ENCODE measurements at regions of chr17 and their contacts with region 1.

Region 1: GRCh38 chr17:77054936-77055335 is 85.8 kb upstream of the SEC14L1 start:
- DNase-seq: no peak
- ATAC-seq: no peak
- H3K4me3 Mint-ChIP-seq: no peak overlapping the region
- H3K27ac Mint-ChIP-seq: no peak overlapping the region
- H3K4me1 Mint-ChIP-seq: peaks cover 3% of the 10 kb centered on the region
- H3K27me3 Mint-ChIP-seq: peaks cover 32% of the 10 kb centered on the region
- CTCF ChIP-seq: no peak

Region 2: DNA sequence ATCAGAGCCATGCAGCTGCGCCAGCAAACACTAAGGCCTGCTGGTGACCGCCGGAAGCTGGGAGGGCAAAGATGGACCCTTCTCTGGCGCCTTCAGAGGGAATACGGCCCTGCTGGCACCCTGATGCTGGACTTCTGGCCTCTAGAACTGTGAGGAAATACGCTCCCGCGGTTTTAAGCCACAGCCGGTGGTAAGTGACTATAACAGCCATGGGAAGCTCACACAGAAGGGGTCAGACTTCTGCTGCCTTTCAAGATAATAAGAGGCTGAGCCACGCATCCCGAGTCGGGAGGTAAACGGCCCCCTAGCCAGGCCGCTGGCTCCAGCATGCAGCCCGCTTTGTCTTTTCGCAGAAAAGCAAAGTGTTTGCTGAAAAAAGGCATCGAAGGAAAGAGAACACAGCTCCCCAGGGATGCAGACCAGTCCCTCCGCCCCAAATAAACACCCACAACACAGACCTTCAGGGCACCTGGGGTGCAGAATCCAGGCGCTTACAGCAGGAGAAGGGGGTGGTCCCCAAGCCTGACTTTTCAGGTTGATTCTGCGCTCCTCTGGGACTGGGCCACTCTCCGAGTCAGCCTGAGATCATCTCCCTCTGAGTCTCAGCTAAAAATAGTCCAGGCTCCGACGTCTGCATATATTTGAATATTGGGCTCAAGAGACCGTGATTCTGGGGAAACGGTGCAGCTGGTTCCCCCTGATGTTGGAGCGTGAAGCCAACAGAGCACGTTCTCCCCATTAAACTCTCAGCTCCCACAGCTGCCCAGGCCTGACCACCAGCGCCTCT is 97.1 kb before region 1 on chr17:
- CTCF ChIA-PET with region 1: interaction called, 19 read pairs
- POLR2A ChIA-PET with region 1: interaction called, 3 read pairs
- intact Hi-C with region 1: loop called (anchors 2 kb)
- DNase-seq: peak; percentile 42
- ATAC-seq: peak; percentile 91
- H3K4me3 Mint-ChIP-seq: peak overlapping the region; percentile 81
- H3K27ac Mint-ChIP-seq: peak overlapping the region; percentile 66
- H3K4me1 Mint-ChIP-seq: peaks cover 31% of the 10 kb centered on the region
- H3K27me3 Mint-ChIP-seq: peaks cover 2% of the 10 kb centered on the region
- CTCF ChIP-seq: no peak

Region 3: GRCh38 chr17:76968707-76969597 is 86.0 kb before region 1 on chr17:
- CTCF ChIA-PET with region 1: interaction called, 12 read pairs
- POLR2A ChIA-PET with region 1: interaction called, 7 read pairs
- intact Hi-C with region 1: no loop called
- DNase-seq: peak; percentile 71
- ATAC-seq: peak; percentile 90
- H3K4me3 Mint-ChIP-seq: peak overlapping the region; percentile 84
- H3K27ac Mint-ChIP-seq: peak overlapping the region; percentile 80
- H3K4me1 Mint-ChIP-seq: peaks cover 28% of the 10 kb centered on the region
- H3K27me3 Mint-ChIP-seq: peaks cover 28% of the 10 kb centered on the region
- CTCF ChIP-seq: no peak

Region 4: GRCh38 chr17:77011173-77012011 is 43.5 kb before region 1 on chr17:
- CTCF ChIA-PET with region 1: interaction called, 7 read pairs
- POLR2A ChIA-PET with region 1: interaction called, 5 read pairs
- intact Hi-C with region 1: loop called (anchors 2 kb)
- DNase-seq: no peak
- ATAC-seq: no peak
- H3K4me3 Mint-ChIP-seq: no peak overlapping the region
- H3K27ac Mint-ChIP-seq: no peak overlapping the region
- H3K4me1 Mint-ChIP-seq: peaks cover 5% of the 10 kb centered on the region
- H3K27me3 Mint-ChIP-seq: peaks cover 8% of the 10 kb centered on the region
- CTCF ChIP-seq: no peak

Region 5: DNA sequence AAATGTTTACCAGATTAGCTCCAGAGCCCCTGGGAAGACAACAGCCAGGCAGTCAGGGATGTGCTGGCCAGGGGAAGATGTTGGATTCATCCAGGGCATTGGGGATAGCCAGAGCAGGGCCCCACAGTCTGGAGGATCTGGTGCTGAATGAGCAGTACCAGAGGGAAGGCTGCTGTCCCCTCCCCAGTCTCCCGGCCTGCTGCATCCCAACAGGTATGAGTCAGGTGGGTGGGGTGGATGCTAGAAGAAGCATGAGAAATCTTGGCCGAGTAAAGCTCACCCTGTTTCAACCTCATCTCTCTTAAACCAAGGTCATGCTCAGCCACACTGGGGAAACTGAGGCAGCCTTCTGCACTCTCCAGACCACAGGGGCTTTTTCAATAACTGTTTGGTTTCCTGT is 14.0 kb after region 1 on chr17:
- CTCF ChIA-PET with region 1: interaction called, 38 read pairs
- POLR2A ChIA-PET with region 1: interaction called, 3 read pairs
- intact Hi-C with region 1: no loop called
- DNase-seq: no peak
- ATAC-seq: no peak
- H3K4me3 Mint-ChIP-seq: no peak overlapping the region
- H3K27ac Mint-ChIP-seq: no peak overlapping the region
- H3K4me1 Mint-ChIP-seq: peaks cover 2% of the 10 kb centered on the region
- H3K27me3 Mint-ChIP-seq: peaks cover 32% of the 10 kb centered on the region
- CTCF ChIP-seq: no peak

Region 6: DNA sequence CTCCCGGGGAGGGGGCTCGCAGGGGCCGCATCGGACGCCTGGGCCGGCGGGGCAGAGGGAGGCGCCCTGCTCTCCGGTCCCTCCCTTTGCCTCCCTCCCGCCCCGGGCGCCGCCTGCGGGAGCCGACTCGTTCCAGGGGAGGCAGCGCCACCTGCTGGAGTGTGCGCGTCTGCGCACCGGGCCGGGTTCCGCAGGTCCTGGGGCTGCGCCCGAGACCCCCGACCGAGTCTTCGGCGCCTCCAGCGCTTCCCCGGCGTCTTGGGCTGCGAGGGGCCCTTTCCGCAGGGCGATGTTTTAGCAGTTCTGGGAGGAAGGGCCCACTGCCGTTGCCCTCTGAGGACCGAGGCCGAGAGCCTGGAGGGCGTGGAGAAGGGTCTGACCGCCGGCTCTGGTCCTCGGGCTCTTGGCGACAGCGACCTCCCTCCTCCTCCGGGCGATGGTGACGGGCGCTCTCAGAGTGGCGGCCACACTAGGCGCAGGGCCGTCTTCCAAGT is 192.2 kb after region 1 on chr17:
- CTCF ChIA-PET with region 1: no interaction called
- POLR2A ChIA-PET with region 1: no interaction called
- intact Hi-C with region 1: loop called (anchors 1 kb)
- DNase-seq: peak; percentile 89
- ATAC-seq: peak; percentile 99
- H3K4me3 Mint-ChIP-seq: peak overlapping the region; percentile 55
- H3K27ac Mint-ChIP-seq: no peak overlapping the region
- H3K4me1 Mint-ChIP-seq: peaks cover 14% of the 10 kb centered on the region
- H3K27me3 Mint-ChIP-seq: peaks cover 28% of the 10 kb centered on the region
- CTCF ChIP-seq: peak; percentile 68